Activated naive CD4-positive, alpha-beta T cell treated with anti-CD3 and anti-CD28 coated beads for 36 hours (primary cell): ENCODE measurements at regions of chr13 and their contacts with region 1.

Region 1: GRCh38 chr13:44435142-44435982 is 61.7 kb downstream of the SERP2 start:
- DNase-seq: peak; percentile 96
- H3K4me3 Mint-ChIP-seq: peak overlapping the region; percentile 76
- H3K27ac Mint-ChIP-seq: peak overlapping the region; percentile 24
- H3K4me1 Mint-ChIP-seq: peaks cover 15% of the 10 kb centered on the region
- H3K27me3 Mint-ChIP-seq: peaks cover 9% of the 10 kb centered on the region

Region 2: GRCh38 chr13:44050450-44051063 is 384.8 kb before region 1 on chr13:
- CTCF ChIA-PET with region 1: interaction called, 8 read pairs
- intact Hi-C with region 1: loop called (anchors 1 kb)
- DNase-seq: no peak
- H3K4me3 Mint-ChIP-seq: no peak overlapping the region
- H3K27ac Mint-ChIP-seq: no peak overlapping the region
- H3K4me1 Mint-ChIP-seq: peaks cover 5% of the 10 kb centered on the region
- H3K27me3 Mint-ChIP-seq: peaks cover 25% of the 10 kb centered on the region

Region 3: DNA sequence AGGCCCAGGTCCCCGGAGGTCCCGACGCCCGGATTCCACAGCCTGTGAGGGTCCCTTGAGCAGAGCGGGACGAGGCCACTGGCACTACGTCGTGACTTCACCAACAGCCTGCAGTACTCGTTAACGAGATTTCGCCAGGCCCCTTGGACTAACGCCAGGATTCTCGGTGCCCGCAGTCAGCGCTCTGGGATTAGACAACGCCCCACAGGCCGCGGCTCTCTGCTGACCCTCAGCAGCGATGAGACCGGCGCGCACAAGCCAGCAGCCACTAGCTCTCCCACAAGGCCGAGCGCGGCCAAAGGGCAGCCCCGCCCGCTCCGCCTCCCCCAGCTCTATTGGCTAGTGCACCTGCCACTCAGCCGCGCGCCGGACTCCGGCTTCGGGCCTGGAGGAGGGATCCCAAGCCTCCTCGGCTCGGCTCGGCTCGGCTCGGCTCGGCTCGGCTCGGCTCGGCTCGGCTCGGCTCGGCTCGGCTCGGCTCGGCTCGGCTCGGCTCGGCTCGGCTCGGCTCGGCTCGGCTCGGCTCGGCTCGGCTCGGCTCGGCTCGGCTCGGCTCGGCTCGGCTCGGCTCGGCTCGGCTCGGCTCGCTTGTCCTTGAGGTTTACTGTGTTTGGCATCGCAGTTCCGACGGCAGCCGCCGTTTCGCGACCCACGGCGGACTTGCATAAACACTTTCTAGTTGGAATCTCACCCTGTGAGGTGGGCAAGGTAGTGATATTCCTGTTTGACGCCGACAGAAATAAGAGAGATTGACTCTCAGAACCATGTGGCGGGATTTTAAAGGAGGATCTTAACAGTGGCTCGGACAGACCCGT is 293.4 kb before region 1 on chr13:
- CTCF ChIA-PET with region 1: interaction called, 4 read pairs
- intact Hi-C with region 1: loop called (anchors 1 kb)
- DNase-seq: peak; percentile 95
- H3K4me3 Mint-ChIP-seq: peak overlapping the region; percentile 89
- H3K27ac Mint-ChIP-seq: peak overlapping the region; percentile 86
- H3K4me1 Mint-ChIP-seq: peaks cover 14% of the 10 kb centered on the region
- H3K27me3 Mint-ChIP-seq: no peaks in the 10 kb centered on the region

Region 4: GRCh38 chr13:44191504-44192171 is 243.7 kb before region 1 on chr13:
- CTCF ChIA-PET with region 1: interaction called, 38 read pairs
- intact Hi-C with region 1: loop called (anchors 1 kb)
- DNase-seq: peak; percentile 59
- H3K4me3 Mint-ChIP-seq: no peak overlapping the region
- H3K27ac Mint-ChIP-seq: peak overlapping the region; percentile 20
- H3K4me1 Mint-ChIP-seq: peaks cover 35% of the 10 kb centered on the region
- H3K27me3 Mint-ChIP-seq: no peaks in the 10 kb centered on the region

Region 5: DNA sequence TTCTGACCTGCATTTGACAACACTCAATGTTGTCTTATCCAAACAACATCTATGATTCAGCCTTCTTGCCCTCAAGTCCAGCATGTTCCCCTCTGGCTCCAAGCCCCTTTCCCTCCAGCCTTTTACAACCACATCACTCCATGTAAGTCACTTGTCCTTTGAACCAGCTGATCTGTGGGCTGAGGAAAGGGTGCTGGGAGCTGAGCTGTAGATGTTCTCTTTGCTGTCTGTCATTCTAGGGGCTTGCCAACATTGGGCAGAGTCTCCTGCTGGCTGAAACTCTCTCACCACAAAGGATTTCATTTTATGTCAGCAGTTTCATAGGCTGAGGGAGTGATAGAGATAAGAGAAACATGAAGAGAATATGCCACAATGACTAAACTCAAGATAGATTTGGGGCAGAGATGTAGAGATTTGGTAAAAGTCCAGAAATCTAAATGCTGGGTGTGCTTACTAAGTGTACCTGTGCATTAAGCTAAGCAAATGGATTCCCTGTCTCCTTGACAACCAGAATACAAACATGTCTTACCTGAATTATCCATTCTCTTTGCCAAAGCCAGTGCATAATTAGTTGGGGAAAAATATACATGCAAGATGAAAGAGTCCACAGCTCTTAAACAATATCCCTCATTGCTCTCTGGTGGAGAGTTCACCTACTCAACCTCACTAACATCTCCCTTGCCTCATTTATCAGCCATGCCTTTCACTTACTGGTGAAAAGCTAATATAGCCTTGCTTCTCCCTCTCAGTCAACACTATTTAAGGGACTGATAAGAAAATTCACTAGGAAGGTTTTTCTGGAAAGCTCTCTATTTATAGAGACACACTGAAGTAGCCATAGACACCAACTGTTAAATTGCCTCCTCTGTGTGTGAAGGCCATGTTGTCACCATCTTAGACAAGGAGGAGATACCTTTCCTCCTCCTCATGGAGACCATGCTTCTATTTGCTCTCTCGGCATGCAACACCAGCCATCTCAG is 237.3 kb before region 1 on chr13:
- CTCF ChIA-PET with region 1: no interaction called
- intact Hi-C with region 1: loop called (anchors 2 kb)
- DNase-seq: peak; percentile 65
- H3K4me3 Mint-ChIP-seq: no peak overlapping the region
- H3K27ac Mint-ChIP-seq: no peak overlapping the region
- H3K4me1 Mint-ChIP-seq: peaks cover 36% of the 10 kb centered on the region
- H3K27me3 Mint-ChIP-seq: peaks cover 6% of the 10 kb centered on the region

Region 6: GRCh38 chr13:44243198-44243857 is 192.0 kb before region 1 on chr13:
- CTCF ChIA-PET with region 1: interaction called, 3 read pairs
- intact Hi-C with region 1: loop called (anchors 1 kb)
- DNase-seq: peak; percentile 69
- H3K4me3 Mint-ChIP-seq: no peak overlapping the region
- H3K27ac Mint-ChIP-seq: no peak overlapping the region
- H3K4me1 Mint-ChIP-seq: peaks cover 10% of the 10 kb centered on the region
- H3K27me3 Mint-ChIP-seq: peaks cover 4% of the 10 kb centered on the region

Region 7: DNA sequence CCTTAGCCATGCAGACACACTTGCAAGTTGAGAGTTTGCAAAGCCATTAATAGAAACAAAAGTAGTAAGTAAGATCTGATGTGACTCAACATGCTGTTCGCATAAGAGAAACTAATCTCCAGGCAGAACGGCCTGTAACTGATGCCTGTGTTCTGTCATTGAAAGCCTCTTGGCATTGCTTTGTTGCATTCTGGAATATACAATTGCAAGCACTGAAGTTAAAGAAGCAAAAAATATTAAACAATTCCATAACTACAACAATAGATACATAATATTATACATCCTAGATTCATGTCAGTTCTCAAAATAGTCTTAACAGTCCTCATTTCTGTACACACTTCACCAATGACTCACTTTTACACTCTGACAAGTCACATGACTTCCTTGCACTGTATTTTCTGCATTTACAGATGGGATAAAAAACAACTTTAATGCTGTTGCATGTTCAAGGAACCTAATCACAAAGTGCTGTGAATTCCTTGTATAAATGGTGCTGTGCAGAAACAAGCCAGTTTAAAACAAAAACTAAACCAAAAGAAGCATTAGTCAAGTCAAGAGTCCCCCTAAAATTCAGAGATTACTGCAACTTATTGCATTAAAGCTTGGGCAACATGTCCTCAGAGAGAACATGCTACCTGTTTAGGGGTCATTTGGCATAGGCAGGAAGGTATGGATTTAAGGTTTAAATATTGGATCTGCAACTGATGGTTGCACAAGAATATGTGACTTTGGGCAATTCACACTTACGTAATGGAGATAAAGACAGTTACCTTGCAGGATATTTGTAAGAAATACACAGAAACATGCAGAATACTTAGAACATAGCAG is 141.2 kb before region 1 on chr13:
- CTCF ChIA-PET with region 1: no interaction called
- intact Hi-C with region 1: loop called (anchors 5 kb)
- DNase-seq: peak; percentile 27
- H3K4me3 Mint-ChIP-seq: no peak overlapping the region
- H3K27ac Mint-ChIP-seq: peak overlapping the region; percentile 59
- H3K4me1 Mint-ChIP-seq: peaks cover 27% of the 10 kb centered on the region
- H3K27me3 Mint-ChIP-seq: peaks cover 18% of the 10 kb centered on the region